ENCODE measurements at regions of chr1 and their contacts with region 1.

Region 1: DNA sequence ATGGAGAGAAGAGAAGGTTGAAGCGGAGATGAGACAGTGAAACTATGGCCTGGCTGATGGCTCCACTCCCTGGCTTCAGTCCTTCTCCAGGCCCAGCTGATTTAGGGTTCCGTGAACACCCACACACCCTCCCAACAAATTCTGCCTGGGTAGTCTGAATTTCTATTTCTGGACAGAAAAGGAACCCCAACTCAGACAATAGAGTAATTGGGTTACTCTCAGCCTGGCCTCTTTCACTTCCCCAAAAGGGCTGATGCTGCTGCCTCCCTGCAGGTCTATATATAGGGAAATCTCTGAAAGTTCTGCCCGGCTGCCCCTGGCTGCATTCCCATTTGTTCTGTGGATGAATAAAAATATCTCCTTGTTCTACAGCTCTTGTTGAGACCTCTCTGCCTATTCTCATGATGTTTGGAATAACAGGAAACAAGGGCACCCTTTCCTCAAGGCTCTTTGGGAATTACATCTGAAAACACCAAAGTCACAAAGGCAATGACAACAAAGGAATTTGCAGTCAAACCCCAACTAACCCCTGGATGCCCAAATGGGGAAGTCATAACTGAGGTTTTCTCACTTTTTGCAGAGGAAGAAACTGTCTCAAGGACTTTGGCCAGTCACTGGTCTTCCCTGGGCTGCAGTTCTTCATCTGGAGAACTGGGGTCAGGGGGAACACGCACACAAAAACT is 11.4 kb upstream of the ZSCAN20 start:
- DNase-seq: no peak
- ATAC-seq: peak; percentile 80

Region 2: DNA sequence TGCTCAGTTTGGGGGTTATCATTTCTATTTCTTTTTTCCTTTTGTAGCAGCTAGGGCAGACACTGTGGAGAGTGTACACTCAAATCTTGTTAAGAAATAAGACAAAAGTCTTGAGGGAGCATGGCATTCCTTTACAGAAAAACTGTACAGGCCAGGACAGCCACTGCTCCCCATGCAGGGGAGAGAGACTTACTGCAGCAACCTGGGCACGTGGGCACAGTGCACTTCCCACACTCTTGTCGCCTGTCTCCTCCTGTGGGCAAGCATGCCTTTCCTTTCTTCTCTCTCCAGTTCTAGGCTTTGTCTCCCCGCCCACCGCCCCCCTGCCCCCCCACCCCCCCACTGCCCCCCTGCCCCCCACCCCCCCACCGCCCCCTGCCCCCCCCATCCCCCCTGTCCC is 82.1 kb before region 1 on chr1:
- intact Hi-C with region 1: loop called (anchors 10 kb)
- DNase-seq: peak; percentile 37
- ATAC-seq: no peak